ENCODE measurements at regions of chr10 and their contacts with region 1.

Region 1: GRCh38 chr10:60456053-60456452 is 66.4 kb upstream of the ANK3 start:
- DNase-seq: no peak
- H3K4me3 ChIP-seq: no peak overlapping the region
- H3K27ac ChIP-seq: no peak overlapping the region
- H3K4me1 ChIP-seq: peaks cover 0 to 5% (median 0%) of the 10 kb centered on the region in 4 donors
- H3K27me3 ChIP-seq: no peaks in the 10 kb centered on the region
- CTCF ChIP-seq: no peak
- EP300 ChIP-seq: no peak
- POLR2A ChIP-seq: no peak

Region 2: DNA sequence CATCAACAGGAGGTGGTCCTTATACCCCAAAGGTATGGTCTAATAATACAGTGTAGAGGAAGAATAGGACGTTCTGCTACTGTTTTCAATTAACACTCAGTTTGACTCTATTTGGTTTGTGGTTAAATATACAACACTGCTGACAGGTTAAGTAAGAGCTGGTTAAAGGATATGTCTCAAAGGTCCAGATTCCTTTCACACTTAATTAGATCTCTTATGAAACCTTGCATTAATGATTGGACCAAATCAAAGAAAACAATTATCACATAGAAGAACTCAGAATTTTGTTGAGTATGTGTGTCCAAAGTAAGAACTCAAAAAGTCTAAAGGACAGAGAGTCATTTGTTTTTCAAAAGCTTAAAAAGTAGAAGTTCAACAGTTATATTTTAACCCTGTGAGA is 720.8 kb before region 1 on chr10:
- in situ Hi-C with region 1: no loop called
- intact Hi-C with region 1: no loop called
- DNase-seq: no peak
- H3K4me3 ChIP-seq: no peak overlapping the region
- H3K27ac ChIP-seq: no peak overlapping the region
- H3K4me1 ChIP-seq: no peaks in the 10 kb centered on the region
- H3K27me3 ChIP-seq: no peaks in the 10 kb centered on the region
- CTCF ChIP-seq: no peak
- EP300 ChIP-seq: no peak
- POLR2A ChIP-seq: no peak

Region 3: DNA sequence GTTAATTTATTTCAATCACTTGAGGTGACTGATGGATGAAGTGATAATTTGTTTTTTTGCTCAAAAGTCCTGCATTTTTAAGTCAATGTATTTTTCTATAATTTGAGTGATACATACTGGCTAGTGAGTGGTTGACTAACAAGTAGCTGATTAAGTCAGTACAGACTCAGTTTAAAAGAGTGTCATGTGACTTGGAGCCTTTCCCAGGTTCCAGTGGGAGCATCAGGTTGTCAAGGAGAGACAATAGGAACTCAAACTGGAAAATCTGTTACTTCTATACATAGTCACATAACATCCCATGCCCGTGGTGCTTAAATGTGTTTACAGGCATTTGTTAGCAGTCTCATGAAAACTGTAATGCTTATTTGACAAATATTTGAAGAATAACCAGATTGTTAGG is 221.1 kb before region 1 on chr10:
- in situ Hi-C with region 1: no loop called
- intact Hi-C with region 1: no loop called
- DNase-seq: no peak
- H3K4me3 ChIP-seq: no peak overlapping the region
- H3K27ac ChIP-seq: no peak overlapping the region
- H3K4me1 ChIP-seq: peaks cover 0 to 9% (median 4%) of the 10 kb centered on the region in 4 donors
- H3K27me3 ChIP-seq: no peaks in the 10 kb centered on the region
- CTCF ChIP-seq: no peak
- EP300 ChIP-seq: no peak
- POLR2A ChIP-seq: no peak

Region 4: DNA sequence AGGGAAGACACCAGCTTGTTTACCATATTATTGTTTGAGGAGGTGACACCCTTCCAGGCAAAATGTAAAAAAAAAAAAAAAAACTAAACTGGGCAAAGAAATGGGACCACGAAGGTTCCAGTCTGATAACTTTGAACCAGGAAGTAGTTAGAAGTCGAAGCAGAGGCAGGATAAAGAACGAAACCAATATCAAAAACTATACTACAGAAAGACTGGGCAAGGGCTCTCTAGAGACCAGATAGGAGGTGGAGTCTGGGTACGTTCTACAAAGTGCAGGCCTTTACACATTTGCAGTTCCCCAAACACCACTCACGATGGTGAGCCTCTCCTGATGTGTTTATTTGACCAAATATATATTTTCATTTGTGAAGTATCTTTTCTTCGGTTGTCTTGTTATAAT is 196.6 kb after region 1 on chr10:
- in situ Hi-C with region 1: loop called in 1 of 4 experiments (anchors 10 kb)
- intact Hi-C with region 1: no loop called
- DNase-seq: no peak
- H3K4me3 ChIP-seq: no peak overlapping the region
- H3K27ac ChIP-seq: no peak overlapping the region
- H3K4me1 ChIP-seq: no peaks in the 10 kb centered on the region
- H3K27me3 ChIP-seq: no peaks in the 10 kb centered on the region
- CTCF ChIP-seq: no peak
- EP300 ChIP-seq: no peak
- POLR2A ChIP-seq: no peak

Region 5: GRCh38 chr10:60757420-60757895 is 301.4 kb after region 1 on chr10:
- in situ Hi-C with region 1: loop called in 1 of 4 experiments (anchors 25 kb)
- intact Hi-C with region 1: no loop called
- DNase-seq: no peak
- H3K4me3 ChIP-seq: no peak overlapping the region
- H3K27ac ChIP-seq: no peak overlapping the region
- H3K4me1 ChIP-seq: no peaks in the 10 kb centered on the region
- H3K27me3 ChIP-seq: no peaks in the 10 kb centered on the region
- CTCF ChIP-seq: no peak
- EP300 ChIP-seq: no peak
- POLR2A ChIP-seq: no peak

Measured in transverse colon (tissue), 4 donors.